CD8-positive, alpha-beta T cell (primary cell): ENCODE measurements at regions of chr5 and their contacts with region 1.

Region 1: GRCh38 chr5:134758504-134759341 is at the start of gene DDX46:
- DNase-seq: peak; percentile 87 to 95 (median 94)
- ATAC-seq: peak; percentile 99
- H3K4me3 ChIP-seq: peak within 1 kb of the TSS; percentile 85 to 88
- H3K4me3 Mint-ChIP-seq: peak within 1 kb of the TSS; percentile 99
- H3K27ac ChIP-seq: peak within 1 kb of the TSS; percentile 76 to 78
- H3K27ac Mint-ChIP-seq: peak within 1 kb of the TSS; percentile 97
- H3K4me1 ChIP-seq: peaks cover 18% of the 10 kb centered on the region
- H3K4me1 Mint-ChIP-seq: peaks cover 36% of the 10 kb centered on the region
- H3K27me3 ChIP-seq: no peaks in the 10 kb centered on the region
- H3K27me3 Mint-ChIP-seq: no peaks in the 10 kb centered on the region
- CTCF ChIP-seq: peak; percentile 75
- total RNA-seq, gene DDX46: 35.1 to 40.4 TPM

Region 2: DNA sequence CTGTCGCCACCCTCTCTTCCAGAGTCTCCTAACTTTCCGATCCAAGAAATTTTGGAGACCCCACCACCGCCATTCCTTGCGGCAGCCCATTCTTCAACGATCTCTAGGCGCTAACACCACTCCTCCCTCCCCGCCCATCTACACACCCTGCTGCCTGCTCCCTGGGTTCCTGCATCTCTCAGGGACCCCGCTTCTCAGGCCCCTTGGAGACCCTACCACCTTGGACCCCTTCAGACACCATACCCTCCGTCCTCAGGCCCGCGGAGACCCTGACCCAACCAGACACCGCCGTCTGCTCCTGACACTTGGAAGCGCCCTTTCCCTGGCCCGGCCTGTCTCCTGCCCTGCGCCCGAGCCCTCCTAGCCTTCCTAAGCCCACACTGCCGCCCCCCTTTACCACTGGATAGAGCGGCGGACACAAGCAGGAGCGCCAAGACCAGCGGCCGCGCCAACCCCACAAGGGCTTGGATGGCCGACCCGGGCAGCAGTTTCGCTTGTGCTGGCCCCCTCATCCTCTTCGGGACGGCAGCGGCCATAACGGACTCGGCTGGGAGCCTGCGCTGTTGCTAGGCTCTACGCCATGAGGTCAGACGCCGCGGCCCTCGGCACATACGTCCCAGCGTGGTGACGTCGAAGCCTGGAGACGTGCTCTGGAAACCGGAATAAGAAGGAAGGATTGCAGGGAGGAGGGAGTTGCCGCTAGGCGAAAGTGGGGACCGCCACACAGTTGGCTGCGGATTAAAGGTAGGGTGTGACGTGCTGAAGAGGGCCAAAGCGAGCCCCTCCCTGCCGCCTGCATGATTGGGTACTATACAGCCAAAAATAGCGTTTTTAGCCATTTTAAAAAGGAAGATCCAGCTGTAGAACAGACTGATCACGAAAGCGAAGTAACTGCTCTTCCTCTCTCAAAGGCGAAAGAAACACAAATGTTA is 790.4 kb before region 1 on chr5 and contains the start of gene C5orf15:
- CTCF ChIA-PET with region 1: no interaction called
- POLR2A ChIA-PET with region 1: no interaction called
- intact Hi-C with region 1: loop called in 1 of 2 experiments (anchors 1 kb)
- DNase-seq: peak; percentile 76 to 98 (median 91)
- ATAC-seq: peak; percentile 93
- H3K4me3 ChIP-seq: peak within 1 kb of the TSS; percentile 85 to 93
- H3K4me3 Mint-ChIP-seq: peak within 1 kb of the TSS; percentile 93
- H3K27ac ChIP-seq: peak within 1 kb of the TSS; percentile 79 to 94
- H3K27ac Mint-ChIP-seq: peak within 1 kb of the TSS; percentile 97
- H3K4me1 ChIP-seq: peaks cover 23% of the 10 kb centered on the region
- H3K4me1 Mint-ChIP-seq: peaks cover 49% of the 10 kb centered on the region
- H3K27me3 ChIP-seq: no peaks in the 10 kb centered on the region
- H3K27me3 Mint-ChIP-seq: no peaks in the 10 kb centered on the region
- CTCF ChIP-seq: no peak
- total RNA-seq, gene C5orf15: 12.4 to 13.0 TPM

Region 3: GRCh38 chr5:134365604-134366003 is 393.1 kb before region 1 on chr5:
- CTCF ChIA-PET with region 1: no interaction called
- POLR2A ChIA-PET with region 1: no interaction called
- intact Hi-C with region 1: loop called in 1 of 2 experiments (anchors 5 kb)
- DNase-seq: no peak
- ATAC-seq: no peak
- H3K4me3 ChIP-seq: no peak overlapping the region
- H3K4me3 Mint-ChIP-seq: peak overlapping the region; percentile 26
- H3K27ac ChIP-seq: no peak overlapping the region
- H3K27ac Mint-ChIP-seq: no peak overlapping the region
- H3K4me1 ChIP-seq: peaks cover 21% of the 10 kb centered on the region
- H3K4me1 Mint-ChIP-seq: peaks cover 31% of the 10 kb centered on the region
- H3K27me3 ChIP-seq: no peaks in the 10 kb centered on the region
- H3K27me3 Mint-ChIP-seq: no peaks in the 10 kb centered on the region
- CTCF ChIP-seq: no peak

Region 4: GRCh38 chr5:134477462-134478250 is 281.1 kb before region 1 on chr5:
- CTCF ChIA-PET with region 1: no interaction called
- POLR2A ChIA-PET with region 1: no interaction called
- intact Hi-C with region 1: no loop called
- DNase-seq: no peak
- ATAC-seq: no peak
- H3K4me3 ChIP-seq: no peak overlapping the region
- H3K4me3 Mint-ChIP-seq: no peak overlapping the region
- H3K27ac ChIP-seq: no peak overlapping the region
- H3K27ac Mint-ChIP-seq: no peak overlapping the region
- H3K4me1 ChIP-seq: no peaks in the 10 kb centered on the region
- H3K4me1 Mint-ChIP-seq: no peaks in the 10 kb centered on the region
- H3K27me3 ChIP-seq: no peaks in the 10 kb centered on the region
- H3K27me3 Mint-ChIP-seq: no peaks in the 10 kb centered on the region
- CTCF ChIP-seq: no peak

Region 5: DNA sequence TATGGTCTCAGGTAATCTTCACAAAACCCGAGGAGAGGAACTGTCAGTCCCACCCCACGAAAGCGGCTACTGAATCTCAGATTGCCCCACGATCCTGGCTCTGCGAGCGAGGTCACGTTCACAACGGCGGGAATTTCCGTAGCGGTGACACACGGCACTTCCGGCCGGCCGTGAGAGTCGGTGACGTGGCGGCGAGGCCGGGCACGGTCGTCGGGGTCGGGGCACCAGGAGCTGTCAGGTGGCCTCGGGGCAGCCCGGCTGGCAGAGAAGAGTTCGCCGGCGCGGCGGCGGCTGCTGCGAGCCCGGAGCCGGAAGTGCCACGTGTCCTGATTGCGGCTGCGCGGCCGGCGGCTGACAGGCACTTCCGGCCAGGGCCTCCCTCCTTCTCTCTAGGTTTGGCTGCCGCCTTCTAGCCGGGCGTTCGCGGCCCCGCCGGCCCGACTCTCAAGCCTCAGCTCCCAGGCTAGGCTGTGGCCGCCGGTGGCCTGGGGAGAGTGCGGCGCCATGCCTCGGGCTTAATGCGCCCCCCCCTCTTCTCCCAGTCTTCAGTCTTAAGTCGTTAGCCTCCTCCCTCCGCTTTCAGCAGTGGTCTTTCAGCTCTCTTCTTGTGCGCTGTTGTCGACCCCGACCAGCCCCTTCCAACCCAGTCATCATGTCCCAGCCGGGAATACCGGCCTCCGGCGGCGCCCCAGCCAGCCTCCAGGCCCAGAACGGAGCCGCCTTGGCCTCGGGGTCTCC is 110.1 kb before region 1 on chr5 and contains the start of gene SEC24A:
- CTCF ChIA-PET with region 1: no interaction called
- POLR2A ChIA-PET with region 1: no interaction called
- intact Hi-C with region 1: loop called (anchors 1 kb)
- DNase-seq: peak; percentile 75 to 98 (median 88)
- ATAC-seq: peak; percentile 77
- H3K4me3 ChIP-seq: peak within 1 kb of the TSS; percentile 74 to 98
- H3K4me3 Mint-ChIP-seq: peak within 1 kb of the TSS; percentile 96
- H3K27ac ChIP-seq: peak within 1 kb of the TSS; percentile 83 to 100
- H3K27ac Mint-ChIP-seq: peak within 1 kb of the TSS; percentile 99
- H3K4me1 ChIP-seq: peaks cover 12% of the 10 kb centered on the region
- H3K4me1 Mint-ChIP-seq: peaks cover 30% of the 10 kb centered on the region
- H3K27me3 ChIP-seq: no peaks in the 10 kb centered on the region
- H3K27me3 Mint-ChIP-seq: no peaks in the 10 kb centered on the region
- CTCF ChIP-seq: no peak
- total RNA-seq, gene SEC24A: 14.4 to 14.5 TPM

Region 6: GRCh38 chr5:134819404-134819963 is 60.8 kb after region 1 on chr5:
- CTCF ChIA-PET with region 1: no interaction called
- POLR2A ChIA-PET with region 1: no interaction called
- intact Hi-C with region 1: no loop called
- DNase-seq: no peak
- ATAC-seq: no peak
- H3K4me3 ChIP-seq: no peak overlapping the region
- H3K4me3 Mint-ChIP-seq: no peak overlapping the region
- H3K27ac ChIP-seq: no peak overlapping the region
- H3K27ac Mint-ChIP-seq: no peak overlapping the region
- H3K4me1 ChIP-seq: no peaks in the 10 kb centered on the region
- H3K4me1 Mint-ChIP-seq: no peaks in the 10 kb centered on the region
- H3K27me3 ChIP-seq: no peaks in the 10 kb centered on the region
- H3K27me3 Mint-ChIP-seq: no peaks in the 10 kb centered on the region
- CTCF ChIP-seq: no peak

Region 7: DNA sequence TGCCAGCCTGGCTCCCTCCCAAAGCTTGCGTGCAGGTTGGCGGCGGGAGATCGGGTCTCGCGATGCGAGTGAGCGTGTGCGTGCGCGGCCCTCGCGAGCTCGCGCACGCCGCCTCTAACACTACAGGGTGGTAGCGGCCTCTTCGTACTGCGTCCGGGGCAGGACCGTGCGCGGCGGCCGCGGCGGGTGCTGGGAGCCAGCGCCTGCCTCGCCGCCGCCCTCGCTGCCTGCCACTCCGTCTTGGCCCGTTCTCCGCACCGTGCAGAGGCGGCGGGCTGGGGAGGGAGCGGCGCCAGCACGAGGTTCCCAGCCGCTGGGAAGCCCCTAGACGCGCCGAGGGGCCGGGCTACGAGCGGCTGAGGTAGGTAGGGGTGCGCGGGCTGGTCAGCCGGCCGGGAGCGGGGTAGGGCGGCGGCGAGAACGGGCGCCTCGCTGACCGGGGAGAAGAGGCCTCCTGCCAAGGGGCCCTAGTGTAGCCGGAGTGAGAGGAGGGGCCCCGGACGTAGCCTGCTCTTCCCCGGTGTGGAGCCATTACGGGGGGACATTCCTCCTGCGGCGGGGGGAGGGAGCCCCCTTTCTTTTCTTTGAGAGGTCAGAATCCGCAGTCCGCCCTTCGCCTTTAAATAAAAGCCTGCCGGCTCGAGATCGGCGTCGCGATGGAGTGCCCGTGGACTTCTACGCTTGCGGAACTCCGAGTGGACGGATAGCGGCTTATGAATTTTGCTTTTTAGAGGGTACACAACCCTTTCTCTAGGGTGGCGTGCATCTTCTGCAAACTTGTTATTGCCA is 87.3 kb after region 1 on chr5 and contains the start of gene C5orf24:
- CTCF ChIA-PET with region 1: interaction called, 3 read pairs
- POLR2A ChIA-PET with region 1: interaction called, 4 read pairs
- intact Hi-C with region 1: loop called (anchors 1 to 2 kb)
- DNase-seq: peak; percentile 82 to 98 (median 90)
- ATAC-seq: peak; percentile 92
- H3K4me3 ChIP-seq: peak within 1 kb of the TSS; percentile 85 to 94
- H3K4me3 Mint-ChIP-seq: peak within 1 kb of the TSS; percentile 87
- H3K27ac ChIP-seq: peak within 1 kb of the TSS; percentile 84 to 91
- H3K27ac Mint-ChIP-seq: peak within 1 kb of the TSS; percentile 94
- H3K4me1 ChIP-seq: peaks cover 18% of the 10 kb centered on the region
- H3K4me1 Mint-ChIP-seq: peaks cover 34% of the 10 kb centered on the region
- H3K27me3 ChIP-seq: no peaks in the 10 kb centered on the region
- H3K27me3 Mint-ChIP-seq: no peaks in the 10 kb centered on the region
- CTCF ChIP-seq: no peak
- total RNA-seq, gene C5orf24: 29.9 to 31.0 TPM